B cell (primary cell): ENCODE measurements at regions of chr5 and their contacts with region 1.

Region 1: DNA sequence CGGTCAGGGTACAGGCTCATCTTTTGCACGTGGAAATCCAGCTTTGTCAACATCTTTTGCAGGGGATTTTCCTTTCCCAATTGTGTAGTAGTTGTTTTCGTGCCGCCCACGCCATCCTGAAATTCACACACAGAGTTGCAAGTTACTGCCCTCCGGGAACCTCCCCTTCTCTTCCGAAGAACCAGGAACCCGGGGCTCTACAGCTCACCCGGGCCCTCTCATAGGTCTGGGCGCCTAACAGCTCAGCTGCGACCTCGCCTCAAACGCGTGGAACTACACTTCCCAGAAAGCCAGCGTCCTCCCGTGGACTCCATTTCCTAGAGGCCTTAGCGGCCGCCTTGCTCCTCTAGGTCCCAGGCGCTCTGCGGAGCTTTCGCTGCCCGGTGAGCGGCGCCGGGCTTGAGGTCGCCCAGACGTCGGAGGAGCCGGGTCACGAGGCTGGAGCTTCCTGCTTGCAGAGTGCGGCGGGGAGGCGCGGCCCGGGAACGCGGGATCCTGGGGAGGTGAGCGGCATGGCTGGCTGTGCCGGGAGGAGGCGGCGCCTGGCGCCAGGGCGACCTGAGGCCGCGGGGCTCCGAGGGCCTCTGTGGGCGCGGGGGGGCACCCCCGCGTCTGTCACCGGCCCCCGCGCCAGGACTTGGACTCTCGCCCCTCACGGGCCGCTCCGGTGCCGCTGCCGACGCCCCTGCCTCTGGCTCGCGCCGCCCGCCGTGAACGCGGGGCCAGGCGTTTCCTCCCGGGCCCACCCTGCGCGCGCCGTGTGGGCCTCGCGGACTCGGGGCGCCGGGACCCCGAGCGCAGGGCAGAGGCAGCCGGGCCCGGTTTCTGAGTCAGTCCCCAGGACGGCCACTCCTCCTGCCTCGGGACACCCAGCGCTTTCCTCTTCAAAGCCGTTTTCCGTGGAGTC is at the start of gene ZNF354B:
- DNase-seq: peak; percentile 90
- ATAC-seq: peak; percentile 97
- H3K4me3 ChIP-seq: peak within 1 kb of the TSS; percentile 38 to 81 (median 67)
- H3K4me3 Mint-ChIP-seq: peak within 1 kb of the TSS; percentile 93
- H3K27ac ChIP-seq: peak within 1 kb of the TSS; percentile 16 to 71
- H3K27ac Mint-ChIP-seq: peak within 1 kb of the TSS; percentile 90
- H3K4me1 ChIP-seq: peaks cover 4 to 9% of the 10 kb centered on the region in 2 donors
- H3K4me1 Mint-ChIP-seq: peaks cover 22% of the 10 kb centered on the region
- H3K27me3 ChIP-seq: peaks cover 0 to 5% (median 0%) of the 10 kb centered on the region in 4 experiments
- H3K27me3 Mint-ChIP-seq: peaks cover 4% of the 10 kb centered on the region
- CTCF ChIP-seq: no peak
- total RNA-seq, gene ZNF354B: 34.6 and 37.5 TPM in 2 replicates

Region 2: GRCh38 chr5:178232124-178232919 is 627.6 kb before region 1 on chr5 and contains the start of gene PHYKPL:
- CTCF ChIA-PET with region 1: no interaction called
- POLR2A ChIA-PET with region 1: no interaction called
- intact Hi-C with region 1: loop called (anchors 2 kb)
- DNase-seq: peak; percentile 83
- ATAC-seq: peak; percentile 71
- H3K4me3 ChIP-seq: peak within 1 kb of the TSS; percentile 49 to 85 (median 71)
- H3K4me3 Mint-ChIP-seq: peak within 1 kb of the TSS; percentile 87
- H3K27ac ChIP-seq: peak within 1 kb of the TSS; percentile 77 to 88
- H3K27ac Mint-ChIP-seq: peak within 1 kb of the TSS; percentile 93
- H3K4me1 ChIP-seq: peaks cover 21 to 46% of the 10 kb centered on the region in 2 donors
- H3K4me1 Mint-ChIP-seq: peaks cover 50% of the 10 kb centered on the region
- H3K27me3 ChIP-seq: no peaks in the 10 kb centered on the region
- H3K27me3 Mint-ChIP-seq: no peaks in the 10 kb centered on the region
- CTCF ChIP-seq: no peak
- total RNA-seq, gene PHYKPL: 263 and 275 TPM in 2 replicates

Region 3: GRCh38 chr5:178732281-178732680 is 127.6 kb before region 1 on chr5:
- CTCF ChIA-PET with region 1: interaction called, 26 read pairs
- POLR2A ChIA-PET with region 1: interaction called, 3 read pairs
- intact Hi-C with region 1: loop called (anchors 1 kb)
- DNase-seq: no peak
- ATAC-seq: no peak
- H3K4me3 ChIP-seq: no peak overlapping the region
- H3K4me3 Mint-ChIP-seq: peak overlapping the region; percentile 34
- H3K27ac ChIP-seq: no peak overlapping the region
- H3K27ac Mint-ChIP-seq: no peak overlapping the region
- H3K4me1 ChIP-seq: peaks cover 0 to 9% of the 10 kb centered on the region in 2 donors
- H3K4me1 Mint-ChIP-seq: peaks cover 5% of the 10 kb centered on the region
- H3K27me3 ChIP-seq: no peaks in the 10 kb centered on the region
- H3K27me3 Mint-ChIP-seq: peaks cover 3% of the 10 kb centered on the region
- CTCF ChIP-seq: no peak

Region 4: GRCh38 chr5:178872302-178872701 is 12.4 kb after region 1 on chr5:
- CTCF ChIA-PET with region 1: no interaction called
- POLR2A ChIA-PET with region 1: no interaction called
- intact Hi-C with region 1: no loop called
- DNase-seq: no peak
- ATAC-seq: no peak
- H3K4me3 ChIP-seq: no peak overlapping the region
- H3K4me3 Mint-ChIP-seq: no peak overlapping the region
- H3K27ac ChIP-seq: no peak overlapping the region
- H3K27ac Mint-ChIP-seq: no peak overlapping the region
- H3K4me1 ChIP-seq: no peaks in the 10 kb centered on the region
- H3K4me1 Mint-ChIP-seq: no peaks in the 10 kb centered on the region
- H3K27me3 ChIP-seq: no peaks in the 10 kb centered on the region
- H3K27me3 Mint-ChIP-seq: no peaks in the 10 kb centered on the region
- CTCF ChIP-seq: no peak

Region 5: GRCh38 chr5:178895651-178896571 is 36.0 kb after region 1 on chr5 and contains the start of gene ZFP2:
- CTCF ChIA-PET with region 1: no interaction called
- POLR2A ChIA-PET with region 1: no interaction called
- intact Hi-C with region 1: loop called (anchors 1 kb)
- DNase-seq: peak; percentile 58
- ATAC-seq: peak; percentile 91
- H3K4me3 ChIP-seq: peak within 1 kb of the TSS in 4 of 5 experiments; percentile 48 to 77 (median 74)
- H3K4me3 Mint-ChIP-seq: peak within 1 kb of the TSS; percentile 87
- H3K27ac ChIP-seq: peak within 1 kb of the TSS in 1 of 2 donors; percentile 70
- H3K27ac Mint-ChIP-seq: peak within 1 kb of the TSS; percentile 37
- H3K4me1 ChIP-seq: peaks cover 3 to 11% of the 10 kb centered on the region in 2 donors
- H3K4me1 Mint-ChIP-seq: peaks cover 12% of the 10 kb centered on the region
- H3K27me3 ChIP-seq: no peaks in the 10 kb centered on the region
- H3K27me3 Mint-ChIP-seq: no peaks in the 10 kb centered on the region
- CTCF ChIP-seq: no peak
- total RNA-seq, gene ZFP2: 1.8 and 2.2 TPM in 2 replicates

Region 6: GRCh38 chr5:179023528-179024430 is 163.9 kb after region 1 on chr5 and contains the start of gene ZNF879:
- CTCF ChIA-PET with region 1: no interaction called
- POLR2A ChIA-PET with region 1: no interaction called
- intact Hi-C with region 1: loop called (anchors 1 kb)
- DNase-seq: peak; percentile 97
- ATAC-seq: peak; percentile 94
- H3K4me3 ChIP-seq: peak within 1 kb of the TSS; percentile 53 to 74 (median 67)
- H3K4me3 Mint-ChIP-seq: peak within 1 kb of the TSS; percentile 97
- H3K27ac ChIP-seq: peak within 1 kb of the TSS in 1 of 2 donors; percentile 76
- H3K27ac Mint-ChIP-seq: peak within 1 kb of the TSS; percentile 91
- H3K4me1 ChIP-seq: peaks cover 7 to 18% of the 10 kb centered on the region in 2 donors
- H3K4me1 Mint-ChIP-seq: peaks cover 15% of the 10 kb centered on the region
- H3K27me3 ChIP-seq: no peaks in the 10 kb centered on the region
- H3K27me3 Mint-ChIP-seq: no peaks in the 10 kb centered on the region
- CTCF ChIP-seq: no peak
- total RNA-seq, gene ZNF879: 13.2 and 14.7 TPM in 2 replicates